ENCODE measurements at regions of chr17 and their contacts with region 1.

Region 1: GRCh38 chr17:31094600-31095238 is at the start of gene NF1:
- DNase-seq: peak; percentile 93
- ATAC-seq: peak; percentile 79
- H3K4me3 ChIP-seq: peak within 1 kb of the TSS; percentile 67 to 90 (median 82)
- H3K4me3 Mint-ChIP-seq: peak within 1 kb of the TSS; percentile 97
- H3K27ac ChIP-seq: peak within 1 kb of the TSS; percentile 75 to 90
- H3K27ac Mint-ChIP-seq: peak within 1 kb of the TSS; percentile 93
- H3K4me1 ChIP-seq: peaks cover 5 to 14% of the 10 kb centered on the region in 2 donors
- H3K4me1 Mint-ChIP-seq: peaks cover 11% of the 10 kb centered on the region
- H3K27me3 ChIP-seq: no peaks in the 10 kb centered on the region
- H3K27me3 Mint-ChIP-seq: no peaks in the 10 kb centered on the region
- CTCF ChIP-seq: no peak
- total RNA-seq, gene NF1: 27.7 and 31.9 TPM in 2 replicates

Region 2: DNA sequence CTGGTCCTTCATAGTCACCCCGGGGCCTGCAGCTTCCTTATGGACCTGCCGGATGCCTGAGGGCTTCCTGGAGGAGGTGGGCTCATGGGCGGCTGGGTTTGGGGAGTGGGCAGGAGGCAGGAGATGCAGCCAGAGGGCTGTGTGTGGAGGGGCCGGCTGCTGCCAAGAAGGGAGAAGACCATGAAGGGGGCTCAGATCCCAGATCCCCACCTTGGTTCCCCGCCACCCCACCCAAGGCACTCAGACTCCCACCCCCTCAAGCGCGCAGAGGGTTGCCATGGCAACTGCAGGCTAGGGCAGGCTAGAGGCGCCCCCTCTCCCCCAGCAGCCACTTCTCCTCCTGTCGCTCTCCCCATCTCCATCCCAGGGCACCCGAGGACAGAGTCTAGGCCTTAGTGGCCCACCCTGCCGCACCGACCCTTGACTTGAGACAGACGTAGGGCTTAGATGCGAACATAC is 374.7 kb before region 1 on chr17:
- CTCF ChIA-PET with region 1: no interaction called
- POLR2A ChIA-PET with region 1: no interaction called
- intact Hi-C with region 1: no loop called
- DNase-seq: no peak
- ATAC-seq: no peak
- H3K4me3 ChIP-seq: no peak overlapping the region
- H3K4me3 Mint-ChIP-seq: no peak overlapping the region
- H3K27ac ChIP-seq: no peak overlapping the region
- H3K27ac Mint-ChIP-seq: no peak overlapping the region
- H3K4me1 ChIP-seq: peaks cover 0 to 6% of the 10 kb centered on the region in 2 donors
- H3K4me1 Mint-ChIP-seq: peaks cover 7% of the 10 kb centered on the region
- H3K27me3 ChIP-seq: no peaks in the 10 kb centered on the region
- H3K27me3 Mint-ChIP-seq: no peaks in the 10 kb centered on the region
- CTCF ChIP-seq: no peak

Region 3: GRCh38 chr17:31248986-31249834 is 154.5 kb after region 1 on chr17:
- CTCF ChIA-PET with region 1: no interaction called
- POLR2A ChIA-PET with region 1: interaction called, 10 read pairs
- intact Hi-C with region 1: no loop called
- DNase-seq: no peak
- ATAC-seq: no peak
- H3K4me3 ChIP-seq: no peak overlapping the region
- H3K4me3 Mint-ChIP-seq: no peak overlapping the region
- H3K27ac ChIP-seq: no peak overlapping the region
- H3K27ac Mint-ChIP-seq: no peak overlapping the region
- H3K4me1 ChIP-seq: peaks cover 2 to 11% of the 10 kb centered on the region in 2 donors
- H3K4me1 Mint-ChIP-seq: peaks cover 13% of the 10 kb centered on the region
- H3K27me3 ChIP-seq: no peaks in the 10 kb centered on the region
- H3K27me3 Mint-ChIP-seq: no peaks in the 10 kb centered on the region
- CTCF ChIP-seq: no peak

Region 4: DNA sequence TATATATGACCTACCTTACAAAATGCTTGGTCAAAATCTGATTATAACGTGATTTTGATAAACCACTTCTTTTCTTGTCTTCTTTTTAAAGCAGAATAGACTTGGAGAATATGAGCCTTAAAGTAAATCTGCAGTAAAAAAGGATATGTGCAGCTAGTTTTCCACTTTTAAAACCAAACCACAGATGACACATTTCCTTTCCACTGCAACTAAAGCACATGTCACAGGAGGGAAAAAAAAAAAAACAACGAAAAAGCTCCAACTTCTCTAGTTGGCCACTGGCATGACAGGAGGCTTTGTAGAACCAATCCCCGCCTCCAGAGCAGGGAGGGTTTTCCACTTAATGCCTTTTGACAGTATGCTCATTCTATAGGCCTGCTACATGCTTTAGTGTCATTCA is 226.8 kb after region 1 on chr17 and contains the start of gene EVI2A:
- CTCF ChIA-PET with region 1: no interaction called
- POLR2A ChIA-PET with region 1: no interaction called
- intact Hi-C with region 1: loop called (anchors 10 kb)
- DNase-seq: peak; percentile 81
- ATAC-seq: peak; percentile 71
- H3K4me3 ChIP-seq: peak within 1 kb of the TSS; percentile 40 to 98 (median 69)
- H3K4me3 Mint-ChIP-seq: peak within 1 kb of the TSS; percentile 87
- H3K27ac ChIP-seq: peak within 1 kb of the TSS; percentile 40 to 91
- H3K27ac Mint-ChIP-seq: peak within 1 kb of the TSS; percentile 69
- H3K4me1 ChIP-seq: peaks cover 19 to 32% of the 10 kb centered on the region in 2 donors
- H3K4me1 Mint-ChIP-seq: peaks cover 37% of the 10 kb centered on the region
- H3K27me3 ChIP-seq: no peaks in the 10 kb centered on the region
- H3K27me3 Mint-ChIP-seq: no peaks in the 10 kb centered on the region
- CTCF ChIP-seq: no peak
- total RNA-seq, gene EVI2A: 47.3 and 49.3 TPM in 2 replicates